Activated B cell treated with CpG ODN at 0.5 μM for 24 hours (primary cell): ENCODE measurements at regions of chr16 and their contacts with region 1.

Region 1: GRCh38 chr16:90008708-90009535 is 10.3 kb downstream of the DBNDD1 start:
- DNase-seq: peak; percentile 63
- ATAC-seq: peak; percentile 90
- H3K4me3 Mint-ChIP-seq: peak overlapping the region; percentile 60
- H3K27ac Mint-ChIP-seq: peak overlapping the region; percentile 76
- H3K4me1 Mint-ChIP-seq: peaks cover 63% of the 10 kb centered on the region
- H3K27me3 Mint-ChIP-seq: no peaks in the 10 kb centered on the region
- CTCF ChIP-seq: no peak

Region 2: GRCh38 chr16:89581045-89581690 is 427.8 kb before region 1 on chr16:
- CTCF ChIA-PET with region 1: no interaction called
- POLR2A ChIA-PET with region 1: no interaction called
- intact Hi-C with region 1: no loop called
- DNase-seq: no peak
- ATAC-seq: no peak
- H3K4me3 Mint-ChIP-seq: no peak overlapping the region
- H3K27ac Mint-ChIP-seq: no peak overlapping the region
- H3K4me1 Mint-ChIP-seq: no peaks in the 10 kb centered on the region
- H3K27me3 Mint-ChIP-seq: no peaks in the 10 kb centered on the region
- CTCF ChIP-seq: no peak

Region 3: GRCh38 chr16:89925596-89926079 is 83.3 kb before region 1 on chr16:
- CTCF ChIA-PET with region 1: no interaction called
- POLR2A ChIA-PET with region 1: no interaction called
- intact Hi-C with region 1: loop called (anchors 2 kb)
- DNase-seq: no peak
- ATAC-seq: no peak
- H3K4me3 Mint-ChIP-seq: no peak overlapping the region
- H3K27ac Mint-ChIP-seq: no peak overlapping the region
- H3K4me1 Mint-ChIP-seq: peaks cover 25% of the 10 kb centered on the region
- H3K27me3 Mint-ChIP-seq: peaks cover 17% of the 10 kb centered on the region
- CTCF ChIP-seq: no peak

Region 4: GRCh38 chr16:89972244-89973234 is 36.4 kb before region 1 on chr16:
- CTCF ChIA-PET with region 1: no interaction called
- POLR2A ChIA-PET with region 1: interaction called, 3 read pairs
- intact Hi-C with region 1: loop called (anchors 5 kb)
- DNase-seq: peak; percentile 94
- ATAC-seq: peak; percentile 92
- H3K4me3 Mint-ChIP-seq: peak overlapping the region; percentile 99
- H3K27ac Mint-ChIP-seq: peak overlapping the region; percentile 94
- H3K4me1 Mint-ChIP-seq: peaks cover 41% of the 10 kb centered on the region
- H3K27me3 Mint-ChIP-seq: no peaks in the 10 kb centered on the region
- CTCF ChIP-seq: no peak

Region 5: DNA sequence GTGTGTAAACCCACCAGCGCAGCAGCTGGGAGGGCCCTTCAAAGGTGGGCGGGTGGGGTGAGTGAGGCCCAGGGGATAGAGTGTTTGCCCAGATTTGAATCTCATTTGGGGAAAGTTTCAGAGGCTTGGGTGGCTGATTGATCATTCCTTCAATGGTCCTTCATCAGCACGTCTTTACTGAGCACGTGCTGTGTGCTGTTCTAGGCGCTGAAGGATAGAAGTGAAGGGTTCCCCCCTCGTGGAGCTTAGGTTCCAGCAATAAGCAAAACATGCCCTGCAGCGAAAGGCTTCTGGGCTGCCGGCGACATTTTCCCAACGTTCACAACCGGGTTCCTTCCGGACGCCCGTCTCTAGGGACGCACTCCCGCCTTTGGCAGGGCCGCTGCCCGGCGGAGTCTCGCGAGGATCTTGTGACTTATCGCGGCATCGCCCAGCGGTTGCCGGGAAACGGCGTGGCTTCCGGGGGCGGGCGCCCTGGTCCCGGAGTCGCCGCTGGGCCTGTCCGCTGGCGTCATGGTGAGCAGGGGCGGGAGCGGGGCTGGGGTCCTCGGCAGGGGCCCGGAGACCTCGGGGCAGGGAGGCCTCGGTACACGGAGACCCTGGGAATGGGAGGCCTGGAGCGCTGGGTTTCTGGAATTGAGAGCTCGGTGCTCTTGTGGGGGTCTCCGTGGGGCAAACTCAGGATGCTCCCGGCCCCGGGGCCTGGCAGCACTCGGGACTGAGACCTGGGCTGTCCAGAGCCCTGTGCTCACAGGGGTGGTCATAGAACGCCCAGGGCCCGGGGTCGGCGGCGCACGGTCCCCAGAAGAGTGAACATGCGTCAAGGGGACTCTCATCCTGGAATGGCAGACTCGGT is 13.5 kb after region 1 on chr16:
- CTCF ChIA-PET with region 1: no interaction called
- POLR2A ChIA-PET with region 1: interaction called, 3 read pairs
- intact Hi-C with region 1: loop called (anchors 1 kb)
- DNase-seq: peak; percentile 68
- ATAC-seq: peak; percentile 73
- H3K4me3 Mint-ChIP-seq: peak overlapping the region; percentile 77
- H3K27ac Mint-ChIP-seq: no peak overlapping the region
- H3K4me1 Mint-ChIP-seq: peaks cover 32% of the 10 kb centered on the region
- H3K27me3 Mint-ChIP-seq: peaks cover 7% of the 10 kb centered on the region
- CTCF ChIP-seq: no peak